Activated CD8-positive, alpha-beta T cell treated with anti-CD3 and anti-CD28 coated beads for 36 hours (primary cell): ENCODE measurements at regions of chr21 and their contacts with region 1.

Region 1: DNA sequence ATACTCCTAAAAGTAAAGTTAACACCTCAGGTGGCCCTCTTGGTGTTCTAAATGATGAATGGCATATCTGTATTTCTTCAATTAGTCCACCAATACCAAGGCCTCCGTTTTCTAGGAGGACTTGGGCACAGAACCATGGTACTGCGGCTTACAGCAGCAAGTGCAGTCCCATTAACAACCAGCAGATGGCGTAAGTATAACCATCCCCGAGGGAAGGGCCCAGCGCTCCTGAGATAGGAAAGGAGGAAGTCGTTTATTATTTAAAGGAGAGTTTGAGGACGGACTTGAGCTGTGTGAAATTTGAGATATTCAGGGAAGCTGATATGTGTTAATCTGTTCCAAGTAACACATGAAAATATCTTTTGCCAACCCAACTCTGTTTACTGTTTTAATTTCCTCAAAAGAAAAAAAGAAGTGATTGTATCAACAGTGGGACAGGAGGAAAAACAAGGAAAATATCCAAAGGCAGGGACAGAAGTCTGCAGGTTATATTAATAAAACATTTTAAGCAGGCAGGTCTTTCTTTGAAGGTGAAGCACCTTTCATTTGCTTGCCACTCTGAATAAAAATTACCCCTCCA is 37.7 kb upstream of the KCNJ15 start:
- DNase-seq: peak; percentile 65
- ATAC-seq: peak; percentile 47
- H3K4me3 Mint-ChIP-seq: no peak overlapping the region
- H3K27ac Mint-ChIP-seq: no peak overlapping the region
- H3K4me1 Mint-ChIP-seq: no peaks in the 10 kb centered on the region
- H3K27me3 Mint-ChIP-seq: no peaks in the 10 kb centered on the region
- CTCF ChIP-seq: peak; percentile 81

Region 2: GRCh38 chr21:38333301-38334272 is 114.4 kb after region 1 on chr21:
- CTCF ChIA-PET with region 1: interaction called, 12 read pairs
- POLR2A ChIA-PET with region 1: interaction called, 3 read pairs
- intact Hi-C with region 1: no loop called
- DNase-seq: no peak
- ATAC-seq: no peak
- H3K4me3 Mint-ChIP-seq: no peak overlapping the region
- H3K27ac Mint-ChIP-seq: no peak overlapping the region
- H3K4me1 Mint-ChIP-seq: no peaks in the 10 kb centered on the region
- H3K27me3 Mint-ChIP-seq: no peaks in the 10 kb centered on the region
- CTCF ChIP-seq: no peak